ENCODE measurements at regions of chr3 and their contacts with region 1.

Region 1: DNA sequence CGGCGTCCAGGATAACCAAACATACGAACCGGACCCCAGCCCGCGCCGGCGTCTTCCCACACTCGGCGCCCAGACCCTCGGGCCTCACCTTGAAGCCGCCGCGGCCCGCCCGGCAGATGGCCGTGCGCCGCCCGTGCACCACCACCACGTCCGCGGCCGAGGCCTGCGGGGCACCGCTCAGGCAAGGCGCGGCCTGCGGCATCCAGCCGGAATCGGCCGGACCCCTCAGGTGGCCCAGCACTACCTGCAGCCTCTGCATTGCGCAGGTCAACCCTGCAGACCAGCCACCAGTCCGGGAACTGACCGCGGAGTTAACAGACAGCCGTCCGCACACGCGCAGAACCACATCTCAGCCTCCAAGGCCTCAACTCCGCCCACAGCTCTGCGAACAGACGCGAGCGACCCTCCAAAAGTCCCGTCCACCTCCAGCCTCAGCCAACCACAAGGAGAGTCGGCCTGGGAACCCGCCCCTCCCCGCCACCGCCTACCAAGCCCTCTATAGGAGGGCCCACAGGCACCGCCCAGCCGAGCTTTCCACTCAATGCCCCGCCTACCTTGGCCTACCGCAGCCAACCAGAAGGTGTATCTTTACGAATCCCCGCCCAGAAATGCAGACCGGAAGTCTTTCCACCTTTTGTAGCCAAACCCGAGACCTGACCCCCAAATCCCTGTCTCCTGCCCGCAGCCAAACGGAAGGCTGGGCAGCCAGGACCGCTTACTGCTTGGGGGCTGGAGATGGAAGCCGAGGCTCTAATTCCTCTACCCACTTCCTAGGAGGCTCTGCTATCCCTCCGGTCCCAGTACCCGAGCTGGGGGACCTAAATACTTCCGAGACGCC is at the start of gene ACAA1:
- DNase-seq: peak; percentile 99 to 100
- ATAC-seq: peak; percentile 96 to 97 (median 97)
- H3K4me3 ChIP-seq: peak within 1 kb of the TSS; percentile 99
- H3K27ac ChIP-seq: peak within 1 kb of the TSS; percentile 94
- H3K4me1 ChIP-seq: peaks cover 16% of the 10 kb centered on the region
- H3K27me3 ChIP-seq: no peaks in the 10 kb centered on the region
- CTCF ChIP-seq: no peak
- total RNA-seq, gene ACAA1: 34.9 to 48.6 (median 40.7) TPM

Region 2: GRCh38 chr3:37620071-37620635 is 516.8 kb before region 1 on chr3:
- intact Hi-C with region 1: no loop called
- DNase-seq: no peak
- ATAC-seq: no peak
- H3K4me3 ChIP-seq: no peak overlapping the region
- H3K27ac ChIP-seq: no peak overlapping the region
- H3K4me1 ChIP-seq: no peaks in the 10 kb centered on the region
- H3K27me3 ChIP-seq: no peaks in the 10 kb centered on the region
- CTCF ChIP-seq: no peak

Region 3: DNA sequence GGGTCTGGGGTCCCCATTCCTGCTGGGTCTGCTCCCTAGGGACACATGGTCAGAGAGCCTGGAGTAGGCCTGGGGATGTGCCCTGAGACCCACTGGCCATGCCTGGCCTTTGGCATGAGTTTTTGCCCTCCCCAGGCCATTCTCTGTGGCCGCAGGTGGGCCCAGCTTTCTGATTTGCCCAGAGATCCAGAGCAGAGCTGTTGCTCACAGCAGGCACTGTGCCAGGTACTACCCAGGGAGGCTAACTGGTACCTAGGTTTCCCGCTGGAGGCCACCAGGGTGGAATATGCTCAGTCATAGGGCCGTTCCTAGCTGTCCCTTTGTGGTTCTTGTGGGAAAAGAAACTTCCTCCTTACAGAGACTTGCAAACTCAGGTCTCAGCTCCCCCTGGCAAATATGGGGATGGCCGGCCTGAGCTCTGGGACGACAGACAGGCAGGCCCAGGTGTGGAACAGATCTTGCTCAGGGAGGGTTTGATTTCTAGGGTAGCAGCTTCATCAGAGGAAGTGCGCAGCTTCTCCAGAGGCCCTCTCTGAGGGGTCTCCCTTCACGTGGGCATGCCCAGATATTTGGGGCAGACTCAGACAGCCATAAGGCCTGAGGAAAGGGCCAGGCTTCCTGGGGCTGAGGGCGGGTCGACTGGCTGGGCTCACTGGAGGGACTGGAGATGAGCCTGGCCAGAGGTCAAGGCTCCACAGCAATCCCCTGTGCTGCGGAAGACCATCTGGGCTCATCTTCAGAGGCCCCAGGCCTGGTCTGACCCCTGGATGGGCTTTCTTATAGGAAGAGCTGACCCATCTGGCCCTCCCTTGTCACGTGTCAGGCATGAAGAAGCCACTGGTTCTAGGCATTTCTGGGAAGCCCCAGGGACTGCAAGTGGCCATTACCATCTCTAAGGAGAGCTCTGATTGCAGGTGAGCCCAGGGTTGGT is 28.1 kb before region 1 on chr3:
- intact Hi-C with region 1: no loop called
- DNase-seq: no peak
- ATAC-seq: no peak
- H3K4me3 ChIP-seq: no peak overlapping the region
- H3K27ac ChIP-seq: no peak overlapping the region
- H3K4me1 ChIP-seq: no peaks in the 10 kb centered on the region
- H3K27me3 ChIP-seq: no peaks in the 10 kb centered on the region
- CTCF ChIP-seq: no peak

Region 4: GRCh38 chr3:38164966-38165680 is 28.1 kb after region 1 on chr3 and contains the start of gene OXSR1:
- intact Hi-C with region 1: loop called in 1 of 2 experiments (anchors 2 kb)
- DNase-seq: peak; percentile 99
- ATAC-seq: peak; percentile 92 to 95 (median 93)
- H3K4me3 ChIP-seq: peak within 1 kb of the TSS; percentile 92
- H3K27ac ChIP-seq: peak within 1 kb of the TSS; percentile 99
- H3K4me1 ChIP-seq: peaks cover 29% of the 10 kb centered on the region
- H3K27me3 ChIP-seq: no peaks in the 10 kb centered on the region
- CTCF ChIP-seq: no peak
- total RNA-seq, gene OXSR1: 30.6 to 60.1 (median 47.7) TPM

Region 5: DNA sequence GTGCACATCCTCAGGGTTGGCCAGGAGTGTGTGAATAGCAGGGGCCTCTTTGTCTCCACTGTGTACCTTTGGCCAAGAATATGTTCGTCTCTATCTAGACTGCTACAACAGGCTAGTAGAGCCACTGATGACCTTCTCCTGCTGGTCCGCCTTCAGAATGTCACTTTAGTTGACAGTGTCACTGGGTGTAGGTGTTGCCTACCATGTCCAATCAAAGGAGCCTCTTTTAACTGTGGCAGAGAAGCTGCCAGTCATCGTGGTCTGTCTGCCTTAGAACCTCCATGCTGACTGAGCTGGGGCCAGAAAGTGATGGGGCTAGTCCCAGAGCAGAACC is 68.4 kb after region 1 on chr3:
- intact Hi-C with region 1: no loop called
- DNase-seq: no peak
- ATAC-seq: peak in 3 of 4 donors; percentile 27 to 36 (median 32)
- H3K4me3 ChIP-seq: no peak overlapping the region
- H3K27ac ChIP-seq: no peak overlapping the region
- H3K4me1 ChIP-seq: peaks cover 16% of the 10 kb centered on the region
- H3K27me3 ChIP-seq: no peaks in the 10 kb centered on the region
- CTCF ChIP-seq: no peak

Region 6: GRCh38 chr3:38453075-38453912 is 316.3 kb after region 1 on chr3 and contains the start of gene ACVR2B:
- intact Hi-C with region 1: loop called in 1 of 2 experiments (anchors 10 kb)
- DNase-seq: peak; percentile 91 to 94
- ATAC-seq: peak; percentile 78 to 79 (median 78)
- H3K4me3 ChIP-seq: peak within 1 kb of the TSS; percentile 95
- H3K27ac ChIP-seq: peak within 1 kb of the TSS; percentile 96
- H3K4me1 ChIP-seq: peaks cover 30% of the 10 kb centered on the region
- H3K27me3 ChIP-seq: no peaks in the 10 kb centered on the region
- CTCF ChIP-seq: no peak
- total RNA-seq, gene ACVR2B: 3.4 to 11.9 (median 6.9) TPM